CD4-positive, alpha-beta T cell (primary cell): ENCODE measurements at regions of chr6 and their contacts with region 1.

Region 1: DNA sequence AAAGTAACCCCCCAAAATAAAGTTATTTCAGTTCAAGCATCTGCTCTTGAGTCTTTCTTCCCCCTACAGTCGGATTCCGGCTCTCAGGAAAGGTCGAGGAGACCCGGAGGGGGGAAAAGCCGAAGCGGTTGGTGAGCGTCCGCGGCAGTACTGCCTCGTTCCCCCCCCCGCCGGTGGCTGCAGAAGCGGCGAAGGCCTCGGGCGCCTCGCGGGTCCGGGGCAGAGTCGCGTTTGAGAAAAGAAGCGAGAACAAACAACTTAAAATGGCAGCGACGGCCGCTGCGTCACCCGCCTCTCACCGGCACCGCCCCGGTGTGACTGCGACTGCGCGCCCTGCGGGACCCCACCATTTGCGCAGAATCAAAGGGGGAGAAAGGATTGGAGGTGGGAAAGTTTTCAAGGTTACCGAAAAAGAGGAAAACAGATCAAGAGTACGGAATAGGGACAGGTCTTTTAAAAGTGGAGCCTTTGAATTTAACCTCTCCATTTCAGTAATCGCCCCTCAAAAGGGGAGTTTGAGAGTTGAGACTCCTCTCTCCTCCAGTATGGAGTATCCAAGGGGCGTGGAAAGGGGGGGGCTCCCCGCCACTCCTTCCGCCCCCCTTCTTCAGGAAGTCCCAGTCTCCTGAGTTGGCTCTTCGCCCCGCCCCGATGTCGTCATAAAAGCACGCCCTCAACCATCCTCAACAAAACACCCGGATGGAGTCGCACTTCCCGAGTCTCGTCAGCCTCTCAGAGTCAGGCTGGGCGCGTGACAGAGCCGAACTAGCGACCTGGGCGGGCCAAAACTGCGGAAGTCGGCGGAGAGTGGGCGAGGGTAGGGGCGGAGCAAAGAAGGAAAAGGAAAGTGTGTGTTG is 1.9 kb upstream of the C6orf62 start:
- DNase-seq: peak; percentile 99 to 100 (median 100)
- ATAC-seq: peak; percentile 84
- H3K4me3 ChIP-seq: peak overlapping the region; percentile 98
- H3K4me3 Mint-ChIP-seq: peak overlapping the region; percentile 92
- H3K27ac ChIP-seq: peak overlapping the region; percentile 100
- H3K27ac Mint-ChIP-seq: peak overlapping the region; percentile 94
- H3K4me1 ChIP-seq: peaks cover 25% of the 10 kb centered on the region
- H3K4me1 Mint-ChIP-seq: peaks cover 51% of the 10 kb centered on the region
- H3K27me3 ChIP-seq: no peaks in the 10 kb centered on the region
- H3K27me3 Mint-ChIP-seq: no peaks in the 10 kb centered on the region
- CTCF ChIP-seq: no peak

Region 2: DNA sequence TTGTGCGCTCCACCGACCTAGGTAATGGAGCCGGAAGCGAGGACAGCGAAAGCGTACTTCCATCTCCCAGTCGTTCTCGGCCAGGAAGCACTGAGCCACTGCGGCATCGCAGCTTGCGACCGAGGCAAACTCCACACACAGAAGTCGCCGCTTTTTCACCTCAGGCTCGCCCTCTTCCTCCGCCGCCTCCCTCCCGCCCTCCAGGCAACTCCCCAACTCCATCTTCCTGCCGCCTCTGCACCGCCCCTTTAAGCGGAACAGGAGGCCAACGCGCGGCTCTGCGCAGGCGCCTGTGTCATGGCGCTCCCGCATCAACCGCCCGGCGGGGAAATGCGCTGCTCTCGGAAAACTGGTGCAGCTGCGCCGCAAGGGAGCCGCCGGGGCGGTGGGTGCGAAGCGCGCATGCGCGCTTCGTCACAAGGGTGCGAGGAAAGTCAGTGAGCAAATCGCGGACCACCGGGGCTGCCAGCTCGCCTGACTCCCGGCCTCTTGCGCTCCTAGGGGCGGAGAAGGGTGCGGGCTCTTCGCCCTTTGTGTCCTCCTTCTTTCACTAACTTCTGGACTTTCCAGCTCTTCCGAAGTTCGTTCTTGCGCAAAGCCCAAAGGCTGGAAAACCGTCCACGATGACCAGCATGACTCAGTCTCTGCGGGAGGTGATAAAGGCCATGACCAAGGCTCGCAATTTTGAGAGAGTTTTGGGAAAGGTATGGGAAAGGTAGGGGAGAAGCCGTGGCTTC is 54.0 kb before region 1 on chr6 and contains the starts of genes ACOT13 and TDP2:
- CTCF ChIA-PET with region 1: interaction called, 11 read pairs
- POLR2A ChIA-PET with region 1: interaction called, 42 read pairs
- intact Hi-C with region 1: loop called (anchors 1 kb)
- DNase-seq: peak; percentile 92 to 99 (median 95)
- ATAC-seq: peak; percentile 92
- H3K4me3 ChIP-seq: peak within 1 kb of the TSS; percentile 96
- H3K4me3 Mint-ChIP-seq: peak within 1 kb of the TSS; percentile 100
- H3K27ac ChIP-seq: peak within 1 kb of the TSS; percentile 78 to 83
- H3K27ac Mint-ChIP-seq: peak within 1 kb of the TSS; percentile 97
- H3K4me1 ChIP-seq: peaks cover 33% of the 10 kb centered on the region
- H3K4me1 Mint-ChIP-seq: peaks cover 45% of the 10 kb centered on the region
- H3K27me3 ChIP-seq: no peaks in the 10 kb centered on the region
- H3K27me3 Mint-ChIP-seq: no peaks in the 10 kb centered on the region
- CTCF ChIP-seq: peak; percentile 39
- total RNA-seq, gene ACOT13: 1.5 TPM
- total RNA-seq, gene TDP2: 63.9 to 64.6 TPM

Region 3: DNA sequence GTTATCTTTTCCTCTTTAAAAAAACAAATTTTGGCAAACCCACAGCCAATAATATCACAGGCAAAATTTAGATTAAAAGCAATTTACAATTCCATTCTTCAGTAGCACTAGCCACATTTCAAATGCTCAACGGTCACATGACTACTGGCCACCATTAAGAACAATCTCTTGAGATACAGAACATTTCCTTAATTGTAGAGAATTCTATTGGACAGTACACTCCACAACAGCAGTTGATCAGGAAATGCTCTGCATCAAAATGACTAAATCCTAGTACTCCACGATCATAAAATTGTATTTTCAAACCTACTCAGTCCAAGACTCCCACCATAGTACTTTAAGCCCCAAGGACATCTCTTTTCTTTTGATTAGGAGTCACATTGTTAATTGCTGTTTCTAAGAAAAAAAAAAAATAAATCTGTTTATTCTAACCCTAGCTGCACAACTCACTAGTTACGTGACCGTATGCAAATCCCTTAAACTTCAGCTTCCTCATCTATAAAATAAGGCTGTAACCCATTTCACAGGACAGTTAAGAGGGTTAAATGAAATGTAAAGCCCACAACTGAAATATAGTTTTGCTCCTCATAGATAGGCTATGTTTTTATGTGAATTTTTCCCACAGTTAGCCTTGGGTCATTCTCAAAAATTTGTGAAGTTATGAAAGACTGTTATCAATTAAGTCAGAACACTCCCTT is 11.7 kb before region 1 on chr6:
- CTCF ChIA-PET with region 1: no interaction called
- POLR2A ChIA-PET with region 1: interaction called, 15 read pairs
- intact Hi-C with region 1: no loop called
- DNase-seq: no peak
- ATAC-seq: no peak
- H3K4me3 ChIP-seq: no peak overlapping the region
- H3K4me3 Mint-ChIP-seq: no peak overlapping the region
- H3K27ac ChIP-seq: no peak overlapping the region
- H3K27ac Mint-ChIP-seq: peak overlapping the region; percentile 30
- H3K4me1 ChIP-seq: peaks cover 17% of the 10 kb centered on the region
- H3K4me1 Mint-ChIP-seq: peaks cover 75% of the 10 kb centered on the region
- H3K27me3 ChIP-seq: no peaks in the 10 kb centered on the region
- H3K27me3 Mint-ChIP-seq: no peaks in the 10 kb centered on the region
- CTCF ChIP-seq: no peak

Region 4: GRCh38 chr6:24752917-24753490 is 32.2 kb after region 1 on chr6:
- CTCF ChIA-PET with region 1: no interaction called
- POLR2A ChIA-PET with region 1: no interaction called
- intact Hi-C with region 1: no loop called
- DNase-seq: no peak
- ATAC-seq: no peak
- H3K4me3 ChIP-seq: no peak overlapping the region
- H3K4me3 Mint-ChIP-seq: no peak overlapping the region
- H3K27ac ChIP-seq: no peak overlapping the region
- H3K27ac Mint-ChIP-seq: no peak overlapping the region
- H3K4me1 ChIP-seq: no peaks in the 10 kb centered on the region
- H3K4me1 Mint-ChIP-seq: no peaks in the 10 kb centered on the region
- H3K27me3 ChIP-seq: no peaks in the 10 kb centered on the region
- H3K27me3 Mint-ChIP-seq: no peaks in the 10 kb centered on the region
- CTCF ChIP-seq: no peak

Region 5: DNA sequence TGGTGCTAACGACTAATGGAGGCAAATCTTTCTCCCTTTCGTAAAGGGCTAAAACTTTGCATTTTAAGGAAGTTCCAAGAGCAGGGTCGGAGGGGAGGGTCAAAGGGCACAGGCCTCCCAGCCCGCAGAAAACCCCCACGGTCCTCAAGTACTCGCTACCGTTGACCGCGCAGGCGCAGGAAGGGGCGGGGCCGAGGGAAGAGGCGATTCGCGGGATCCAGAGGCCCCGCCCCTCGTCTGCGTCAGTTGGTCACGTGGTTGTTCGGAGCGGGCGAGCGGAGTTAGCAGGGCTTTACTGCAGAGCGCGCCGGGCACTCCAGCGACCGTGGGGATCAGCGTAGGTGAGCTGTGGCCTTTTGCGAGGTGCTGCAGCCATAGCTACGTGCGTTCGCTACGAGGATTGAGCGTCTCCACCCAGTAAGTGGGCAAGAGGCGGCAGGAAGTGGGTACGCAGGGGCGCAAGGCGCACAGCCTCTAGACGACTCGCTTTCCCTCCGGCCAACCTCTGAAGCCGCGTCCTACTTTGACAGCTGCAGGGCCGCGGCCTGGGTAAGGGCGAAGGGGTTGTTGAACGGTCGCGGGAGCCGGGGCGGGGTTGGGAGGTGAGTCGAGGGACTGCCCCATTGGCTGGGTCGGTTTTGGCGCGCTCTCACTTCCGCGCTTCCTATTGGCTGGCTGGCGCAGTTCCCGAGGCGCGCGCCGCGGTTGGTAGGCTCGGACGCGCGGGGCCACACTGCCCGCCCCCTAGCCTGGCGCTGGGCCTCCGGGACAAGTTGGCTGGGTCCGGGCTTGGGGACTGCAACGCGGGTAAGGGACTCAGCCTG is 54.1 kb after region 1 on chr6 and contains the start of gene GMNN:
- CTCF ChIA-PET with region 1: interaction called, 5 read pairs
- POLR2A ChIA-PET with region 1: interaction called, 22 read pairs
- intact Hi-C with region 1: loop called (anchors 1 to 2 kb)
- DNase-seq: peak; percentile 95 to 99 (median 97)
- ATAC-seq: peak; percentile 83
- H3K4me3 ChIP-seq: peak within 1 kb of the TSS; percentile 99
- H3K4me3 Mint-ChIP-seq: peak within 1 kb of the TSS; percentile 99
- H3K27ac ChIP-seq: peak within 1 kb of the TSS; percentile 87 to 94
- H3K27ac Mint-ChIP-seq: peak within 1 kb of the TSS; percentile 99
- H3K4me1 ChIP-seq: peaks cover 15% of the 10 kb centered on the region
- H3K4me1 Mint-ChIP-seq: peaks cover 32% of the 10 kb centered on the region
- H3K27me3 ChIP-seq: no peaks in the 10 kb centered on the region
- H3K27me3 Mint-ChIP-seq: no peaks in the 10 kb centered on the region
- CTCF ChIP-seq: no peak
- total RNA-seq, gene GMNN: 10.1 to 10.5 TPM